AG04450 (cell line): ENCODE measurements at regions of chr1 and their contacts with region 1.

Region 1: GRCh38 chr1:109773146-109773899 is 9.6 kb upstream of the EPS8L3 start:
- DNase-seq: peak; percentile 71
- H3K4me3 ChIP-seq: no peak overlapping the region
- H3K27ac ChIP-seq: no peak overlapping the region
- H3K27me3 ChIP-seq: no peaks in the 10 kb centered on the region
- CTCF ChIP-seq: peak; percentile 98

Region 2: DNA sequence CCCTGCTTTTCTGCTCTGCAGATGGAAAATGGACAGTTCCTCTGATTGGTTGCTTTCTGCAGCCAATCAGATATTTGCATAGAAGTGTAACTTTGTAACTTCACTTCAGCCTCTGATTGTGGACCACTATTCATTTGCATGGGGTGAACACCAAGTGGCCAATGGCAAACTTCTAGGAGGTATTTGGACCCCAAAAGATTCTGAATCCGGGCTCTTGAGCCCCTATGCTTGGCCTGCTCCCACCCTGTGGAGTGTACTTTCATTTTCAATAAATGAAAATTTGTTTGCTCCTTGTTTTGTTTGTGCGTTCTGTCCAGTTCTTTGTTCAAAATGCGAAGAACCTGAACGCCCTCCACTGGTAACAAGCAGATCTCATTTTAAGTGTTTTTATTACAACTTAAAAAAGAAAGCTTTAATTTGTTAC is 123.8 kb before region 1 on chr1:
- CTCF ChIA-PET with region 1: interaction called, 365 read pairs
- POLR2A ChIA-PET with region 1: no interaction called
- DNase-seq: no peak
- H3K4me3 ChIP-seq: no peak overlapping the region
- H3K27ac ChIP-seq: no peak overlapping the region
- H3K27me3 ChIP-seq: no peaks in the 10 kb centered on the region
- CTCF ChIP-seq: 0 out of 2 replicates have a peak, but pooled peaks have one; percentile 16

Region 3: GRCh38 chr1:109739738-109740660 is 33.3 kb before region 1 on chr1:
- CTCF ChIA-PET with region 1: no interaction called
- POLR2A ChIA-PET with region 1: no interaction called
- DNase-seq: peak; percentile 13
- H3K4me3 ChIP-seq: peak overlapping the region; percentile 79
- H3K27ac ChIP-seq: peak overlapping the region; percentile 61
- H3K27me3 ChIP-seq: peaks cover 3% of the 10 kb centered on the region
- CTCF ChIP-seq: no peak

Region 4: GRCh38 chr1:109850194-109850593 is 76.9 kb after region 1 on chr1:
- CTCF ChIA-PET with region 1: no interaction called
- POLR2A ChIA-PET with region 1: no interaction called
- DNase-seq: no peak
- H3K4me3 ChIP-seq: no peak overlapping the region
- H3K27ac ChIP-seq: no peak overlapping the region
- H3K27me3 ChIP-seq: no peaks in the 10 kb centered on the region
- CTCF ChIP-seq: no peak

Region 5: DNA sequence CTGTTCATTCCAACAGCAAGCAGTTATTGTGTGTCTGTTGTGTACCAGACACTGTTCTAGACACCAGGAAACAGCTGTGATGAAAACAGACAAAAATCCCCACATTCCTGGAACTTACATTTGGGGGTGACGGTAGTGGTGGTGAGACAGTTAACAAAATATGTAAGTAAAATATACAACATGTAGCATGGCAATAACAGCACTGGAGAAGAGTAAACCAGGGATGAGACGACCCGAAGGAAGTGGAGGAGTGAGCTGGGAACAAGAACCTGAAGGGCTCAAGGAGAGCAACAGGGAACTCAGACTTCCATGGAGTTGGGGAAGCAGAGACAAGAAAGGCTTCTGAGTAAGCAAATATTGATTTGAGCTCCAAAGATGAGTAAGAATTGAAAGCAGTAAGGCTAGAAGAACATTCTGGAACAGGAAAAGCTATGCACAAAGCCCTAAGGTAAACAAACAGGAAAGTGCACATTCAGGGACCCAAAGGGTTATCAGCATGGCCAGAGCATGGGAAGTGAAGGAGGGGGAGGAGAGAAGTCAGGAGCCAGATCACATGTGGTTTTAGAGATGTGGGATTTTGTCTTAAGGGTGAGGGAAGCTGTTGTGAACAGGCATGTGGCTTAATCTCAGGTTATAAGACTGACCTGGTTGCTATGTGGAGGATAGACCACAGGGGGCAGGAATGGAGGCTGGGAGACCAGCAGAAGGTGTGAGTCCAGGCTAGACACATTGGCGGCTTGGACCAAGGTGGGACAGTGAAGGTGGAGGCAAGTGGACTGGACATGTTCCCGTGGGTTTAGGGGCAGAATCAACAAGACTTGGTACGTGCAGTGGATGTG is 144.7 kb after region 1 on chr1:
- CTCF ChIA-PET with region 1: interaction called, 14 read pairs
- POLR2A ChIA-PET with region 1: no interaction called
- DNase-seq: no peak
- H3K4me3 ChIP-seq: no peak overlapping the region
- H3K27ac ChIP-seq: peak overlapping the region; percentile 74
- H3K27me3 ChIP-seq: no peaks in the 10 kb centered on the region
- CTCF ChIP-seq: 0 out of 2 replicates have a peak, but pooled peaks have one; percentile 29

Region 6: DNA sequence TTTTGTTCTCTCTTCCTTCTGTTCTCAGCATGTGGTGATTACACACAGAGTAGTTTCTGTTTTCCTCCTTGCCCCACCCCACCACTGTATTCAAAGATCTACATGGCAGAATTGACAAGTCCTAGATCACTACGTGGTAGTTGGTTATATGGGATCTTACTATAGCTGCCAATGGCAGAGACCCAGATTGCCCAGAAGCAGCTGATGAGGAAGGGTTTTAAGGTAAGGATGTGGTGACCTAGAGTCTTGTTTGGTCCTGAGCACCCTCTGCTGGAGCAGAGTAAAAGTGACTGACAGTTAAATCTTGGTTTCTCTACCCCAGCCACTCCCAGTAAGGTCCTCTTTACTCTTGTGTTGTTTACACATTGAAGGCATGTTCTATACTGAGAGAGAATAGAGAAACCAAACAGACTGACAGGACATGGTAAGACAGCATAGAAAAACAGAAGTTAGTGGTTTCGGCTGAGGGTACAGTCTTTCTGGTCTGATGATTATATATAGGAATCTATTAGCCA is 238.3 kb after region 1 on chr1:
- CTCF ChIA-PET with region 1: interaction called, 118 read pairs
- POLR2A ChIA-PET with region 1: no interaction called
- DNase-seq: peak; percentile 34
- H3K4me3 ChIP-seq: no peak overlapping the region
- H3K27ac ChIP-seq: no peak overlapping the region
- H3K27me3 ChIP-seq: no peaks in the 10 kb centered on the region
- CTCF ChIP-seq: peak; percentile 69

Region 7: GRCh38 chr1:110235834-110236682 is 462.7 kb after region 1 on chr1:
- CTCF ChIA-PET with region 1: no interaction called
- POLR2A ChIA-PET with region 1: no interaction called
- DNase-seq: peak; percentile 20
- H3K4me3 ChIP-seq: no peak overlapping the region
- H3K27ac ChIP-seq: peak overlapping the region; percentile 47
- H3K27me3 ChIP-seq: no peaks in the 10 kb centered on the region
- CTCF ChIP-seq: no peak